ENCODE measurements at regions of chr19 and their contacts with region 1.

Region 1: GRCh38 chr19:11090054-11090900 is 1.0 kb downstream of the LDLR start:
- DNase-seq: peak; percentile 99
- H3K4me3 Mint-ChIP-seq: peak overlapping the region; percentile 94
- H3K27ac Mint-ChIP-seq: peak overlapping the region; percentile 99
- H3K4me1 Mint-ChIP-seq: peaks cover 48% of the 10 kb centered on the region
- H3K27me3 Mint-ChIP-seq: no peaks in the 10 kb centered on the region

Region 2: DNA sequence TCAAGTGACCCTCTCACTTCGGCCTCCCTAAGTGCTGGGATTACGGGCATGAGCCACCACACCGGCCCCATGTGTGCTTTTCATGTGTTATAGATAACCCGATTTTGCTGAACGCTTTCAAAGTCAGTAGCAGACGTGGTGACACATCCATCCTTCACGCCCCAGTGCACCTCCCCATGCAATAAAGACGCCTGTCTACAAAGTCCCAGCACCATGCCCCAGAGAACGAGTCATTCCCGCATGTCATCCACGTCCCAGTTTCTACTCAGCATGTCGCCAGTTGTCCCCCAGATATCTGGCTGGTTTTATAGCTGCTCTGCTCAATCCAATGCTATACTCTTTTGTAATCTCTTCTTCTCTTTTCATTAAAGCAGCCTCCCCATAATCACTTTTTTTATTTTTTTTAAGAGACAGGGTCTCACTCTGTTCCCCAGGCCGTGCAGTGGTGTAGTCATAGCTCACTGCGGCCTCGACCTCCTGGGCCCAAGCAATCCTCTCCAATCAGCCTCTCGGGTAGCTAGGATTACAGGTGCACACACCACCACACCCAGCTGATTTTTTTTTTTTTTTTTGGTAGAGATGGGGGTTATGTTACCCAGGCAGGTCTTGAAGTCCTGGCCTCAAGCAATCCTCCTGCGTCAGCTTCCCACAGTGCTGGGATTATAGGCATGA is 329.9 kb before region 1 on chr19:
- CTCF ChIA-PET with region 1: no interaction called
- intact Hi-C with region 1: loop called (anchors 5 kb)
- DNase-seq: peak; percentile 65
- H3K4me3 Mint-ChIP-seq: peak overlapping the region; percentile 71
- H3K27ac Mint-ChIP-seq: peak overlapping the region; percentile 96
- H3K4me1 Mint-ChIP-seq: peaks cover 88% of the 10 kb centered on the region
- H3K27me3 Mint-ChIP-seq: no peaks in the 10 kb centered on the region

Region 3: DNA sequence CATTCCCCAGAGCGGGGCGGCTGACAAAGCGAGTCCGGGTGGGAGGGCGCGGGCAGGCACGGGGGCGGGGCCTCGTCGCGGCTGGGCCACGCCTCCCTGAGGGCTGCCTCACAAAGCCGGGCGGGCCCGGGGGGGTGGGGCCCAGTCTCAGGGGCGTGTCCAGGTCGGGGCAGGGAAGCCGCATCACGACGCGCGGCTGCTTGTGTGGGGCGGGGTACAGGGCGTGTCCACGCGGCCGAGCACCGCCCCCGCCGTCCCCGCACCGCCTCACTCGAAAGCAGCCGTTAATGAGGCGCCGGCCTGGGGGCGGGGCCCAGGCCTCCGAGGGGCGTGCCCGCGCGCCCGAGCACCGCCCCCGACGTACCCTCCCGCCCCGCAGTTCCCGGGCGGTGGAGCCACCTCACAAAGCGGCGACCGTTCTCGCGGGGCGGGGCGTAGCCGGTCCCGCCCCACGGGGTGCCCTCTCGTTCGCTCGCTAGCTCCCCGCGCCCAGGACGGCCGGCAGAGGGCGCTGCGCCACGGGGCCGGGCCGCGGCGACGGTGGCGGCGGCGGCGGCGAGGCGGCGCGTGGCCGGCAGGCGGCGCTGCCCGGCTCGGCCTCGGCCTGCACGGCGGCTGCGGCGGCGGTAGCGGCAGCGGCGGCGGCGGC is 219.2 kb before region 1 on chr19 and contains the start of gene CARM1:
- CTCF ChIA-PET with region 1: interaction called, 3 read pairs
- intact Hi-C with region 1: loop called (anchors 1 kb)
- DNase-seq: peak; percentile 99
- H3K4me3 Mint-ChIP-seq: peak within 1 kb of the TSS; percentile 85
- H3K27ac Mint-ChIP-seq: peak within 1 kb of the TSS; percentile 93
- H3K4me1 Mint-ChIP-seq: peaks cover 31% of the 10 kb centered on the region
- H3K27me3 Mint-ChIP-seq: no peaks in the 10 kb centered on the region
- total RNA-seq, gene CARM1: 88.4 to 89.3 TPM

Region 4: DNA sequence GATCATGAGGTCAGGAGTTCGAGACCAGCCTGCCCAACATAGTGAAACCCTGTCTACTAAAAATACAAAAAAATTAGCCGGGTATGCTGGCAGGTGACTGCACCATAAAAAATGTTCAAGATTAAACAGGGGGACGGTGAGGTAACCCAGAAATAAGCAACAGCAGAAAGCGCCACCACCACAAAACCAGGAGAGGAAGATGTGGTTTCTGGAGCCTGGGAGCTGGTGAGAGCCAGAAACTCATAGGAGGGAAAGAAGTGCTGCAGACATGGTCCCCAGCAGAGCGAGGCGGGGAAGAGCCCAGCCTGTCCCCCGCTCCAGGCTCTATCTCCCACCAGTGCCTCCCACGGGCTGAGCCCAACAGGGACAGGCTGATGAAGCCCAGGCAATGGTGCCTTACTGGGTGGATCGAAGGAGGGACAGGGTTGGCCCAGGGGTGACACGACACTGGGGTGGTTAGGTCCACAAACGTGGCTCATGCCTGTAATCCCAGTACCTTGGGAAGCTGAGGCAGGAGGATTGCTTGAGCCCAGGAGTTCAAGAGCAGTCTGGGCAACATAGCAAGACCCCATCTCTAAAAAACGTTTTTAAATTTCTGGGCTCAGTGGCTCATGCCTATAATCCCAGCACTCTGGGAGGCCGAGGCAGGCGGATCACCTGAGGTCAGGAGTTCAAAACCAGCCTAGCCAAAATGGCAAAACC is 46.3 kb after region 1 on chr19:
- CTCF ChIA-PET with region 1: no interaction called
- intact Hi-C with region 1: no loop called
- DNase-seq: no peak
- H3K4me3 Mint-ChIP-seq: no peak overlapping the region
- H3K27ac Mint-ChIP-seq: no peak overlapping the region
- H3K4me1 Mint-ChIP-seq: peaks cover 10% of the 10 kb centered on the region
- H3K27me3 Mint-ChIP-seq: no peaks in the 10 kb centered on the region

Region 5: DNA sequence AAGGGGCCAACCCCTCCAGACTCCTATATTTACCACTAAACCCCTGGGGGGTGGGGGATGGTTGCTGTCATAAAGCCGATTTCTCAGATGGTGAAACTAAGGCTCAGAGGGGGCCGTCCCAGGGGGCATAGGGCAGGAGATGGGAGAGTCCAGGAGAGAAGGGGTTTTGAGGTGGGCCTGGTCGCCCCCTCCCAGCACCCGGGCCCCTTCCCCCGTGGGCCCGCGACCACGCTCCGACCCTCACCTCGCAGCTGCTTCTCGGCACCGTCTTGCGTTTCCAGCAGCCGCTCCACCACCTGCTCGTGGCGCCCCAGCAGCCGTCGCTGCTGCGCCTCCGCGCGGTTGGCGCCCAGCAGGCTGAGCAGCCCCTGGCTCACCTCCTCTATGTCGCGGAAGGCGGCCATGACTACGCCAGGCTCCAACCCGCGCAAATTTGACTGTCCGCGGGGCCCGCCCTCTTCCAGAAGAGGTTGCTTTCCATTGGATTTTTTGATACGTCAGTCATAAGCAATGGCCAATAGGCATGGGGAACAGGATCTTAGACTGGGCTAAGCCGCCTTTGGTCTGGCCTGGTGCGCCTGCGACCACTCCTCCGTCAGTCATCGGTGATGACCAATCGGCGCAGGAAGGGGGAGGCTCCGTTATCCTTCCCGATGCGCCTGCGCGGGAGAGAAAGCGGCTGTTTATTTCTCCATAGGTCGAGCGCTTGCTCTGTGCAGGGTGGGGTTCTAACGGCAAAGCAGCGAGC is 65.3 kb after region 1 on chr19 and contains the start of gene SPC24:
- CTCF ChIA-PET with region 1: no interaction called
- intact Hi-C with region 1: loop called (anchors 1 kb)
- DNase-seq: peak; percentile 97
- H3K4me3 Mint-ChIP-seq: peak within 1 kb of the TSS; percentile 80
- H3K27ac Mint-ChIP-seq: peak within 1 kb of the TSS; percentile 89
- H3K4me1 Mint-ChIP-seq: peaks cover 10% of the 10 kb centered on the region
- H3K27me3 Mint-ChIP-seq: no peaks in the 10 kb centered on the region
- total RNA-seq, gene SPC24: 94.7 to 102 TPM

Measured in activated naive CD4-positive, alpha-beta T cell treated with anti-CD3 and anti-CD28 coated beads for 36 hours (primary cell).